Transverse colon (tissue), 4 donors: ENCODE measurements at regions of chr14 and their contacts with region 1.

Region 1: DNA sequence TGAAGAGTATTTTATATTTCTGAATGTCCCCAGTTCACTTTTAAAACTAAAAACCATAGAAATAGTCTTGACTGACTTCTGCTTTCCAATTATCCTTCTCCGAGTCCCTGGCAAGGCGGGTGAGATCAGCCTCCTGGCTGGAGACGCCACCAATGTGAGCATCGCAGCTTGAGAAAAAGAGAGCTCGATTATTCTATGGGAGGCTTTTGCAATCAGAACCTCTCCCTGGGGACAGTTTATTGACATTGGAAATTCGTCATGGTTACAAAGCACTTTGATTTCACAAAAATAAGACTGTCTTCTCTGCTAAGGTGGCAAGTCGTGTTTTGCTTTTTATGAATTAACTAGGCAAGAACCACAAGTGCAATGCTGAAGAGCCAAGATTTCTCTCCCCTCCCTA is 23.6 kb upstream of the GPHB5 start:
- DNase-seq: no peak
- H3K4me3 ChIP-seq: no peak overlapping the region
- H3K27ac ChIP-seq: no peak overlapping the region
- H3K4me1 ChIP-seq: no peaks in the 10 kb centered on the region
- H3K27me3 ChIP-seq: peaks cover 6% of the 10 kb centered on the region
- CTCF ChIP-seq: no peak
- EP300 ChIP-seq: no peak
- POLR2A ChIP-seq: no peak

Region 2: GRCh38 chr14:63299351-63300110 is 42.8 kb before region 1 on chr14:
- in situ Hi-C with region 1: no loop called
- intact Hi-C with region 1: loop called (anchors 1 kb)
- DNase-seq: no peak
- H3K4me3 ChIP-seq: no peak overlapping the region
- H3K27ac ChIP-seq: no peak overlapping the region
- H3K4me1 ChIP-seq: no peaks in the 10 kb centered on the region
- H3K27me3 ChIP-seq: no peaks in the 10 kb centered on the region
- CTCF ChIP-seq: no peak
- EP300 ChIP-seq: no peak
- POLR2A ChIP-seq: no peak